Endothelial cell of umbilical vein (primary cell): ENCODE measurements at regions of chr7 and their contacts with region 1.

Region 1: GRCh38 chr7:116354546-116355408 is 144.4 kb downstream of the TES start:
- DNase-seq: peak; percentile 99
- H3K4me3 ChIP-seq: peak overlapping the region in 1 of 3 experiments; percentile 14
- H3K27ac ChIP-seq: peak overlapping the region; percentile 99
- H3K4me1 ChIP-seq: peaks cover 63% of the 10 kb centered on the region
- H3K27me3 ChIP-seq: no peaks in the 10 kb centered on the region
- CTCF ChIP-seq: no peak
- POLR2A ChIP-seq: no peak

Region 2: DNA sequence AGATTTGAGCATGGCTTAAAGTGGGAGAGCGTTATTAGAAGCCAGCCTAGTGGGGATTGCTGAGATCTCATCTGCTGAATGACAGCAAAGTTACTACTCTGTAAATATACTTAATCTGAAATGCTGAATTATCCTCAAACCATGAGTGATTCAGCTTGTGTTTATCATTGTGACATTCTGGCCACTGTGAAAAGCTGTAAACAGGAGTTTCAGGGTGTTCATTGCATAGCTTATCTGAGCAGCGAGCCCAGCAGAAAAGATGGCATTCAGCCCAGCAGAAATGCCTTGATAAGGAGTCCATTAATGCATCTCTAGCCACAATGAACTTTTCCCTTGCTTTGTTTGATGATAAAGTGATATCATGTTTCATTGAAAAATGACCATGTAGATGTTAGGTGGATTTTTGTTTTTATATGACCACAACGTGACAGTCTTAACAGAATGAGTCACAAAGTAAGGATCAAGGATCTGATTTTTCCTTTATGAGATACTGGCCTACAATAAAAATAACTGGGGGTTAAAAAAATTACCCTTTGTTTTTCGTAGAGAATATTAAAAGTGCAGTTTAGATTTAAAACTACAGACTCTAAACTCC is 136.6 kb before region 1 on chr7:
- CTCF ChIA-PET with region 1: no interaction called
- POLR2A ChIA-PET with region 1: no interaction called
- dilution Hi-C with region 1: no loop called
- intact Hi-C with region 1: loop called (anchors 1 kb)
- DNase-seq: peak; percentile 97
- H3K4me3 ChIP-seq: peak overlapping the region in 1 of 3 experiments; percentile 28
- H3K27ac ChIP-seq: peak overlapping the region; percentile 96
- H3K4me1 ChIP-seq: peaks cover 56% of the 10 kb centered on the region
- H3K27me3 ChIP-seq: no peaks in the 10 kb centered on the region
- CTCF ChIP-seq: no peak
- POLR2A ChIP-seq: no peak

Region 3: DNA sequence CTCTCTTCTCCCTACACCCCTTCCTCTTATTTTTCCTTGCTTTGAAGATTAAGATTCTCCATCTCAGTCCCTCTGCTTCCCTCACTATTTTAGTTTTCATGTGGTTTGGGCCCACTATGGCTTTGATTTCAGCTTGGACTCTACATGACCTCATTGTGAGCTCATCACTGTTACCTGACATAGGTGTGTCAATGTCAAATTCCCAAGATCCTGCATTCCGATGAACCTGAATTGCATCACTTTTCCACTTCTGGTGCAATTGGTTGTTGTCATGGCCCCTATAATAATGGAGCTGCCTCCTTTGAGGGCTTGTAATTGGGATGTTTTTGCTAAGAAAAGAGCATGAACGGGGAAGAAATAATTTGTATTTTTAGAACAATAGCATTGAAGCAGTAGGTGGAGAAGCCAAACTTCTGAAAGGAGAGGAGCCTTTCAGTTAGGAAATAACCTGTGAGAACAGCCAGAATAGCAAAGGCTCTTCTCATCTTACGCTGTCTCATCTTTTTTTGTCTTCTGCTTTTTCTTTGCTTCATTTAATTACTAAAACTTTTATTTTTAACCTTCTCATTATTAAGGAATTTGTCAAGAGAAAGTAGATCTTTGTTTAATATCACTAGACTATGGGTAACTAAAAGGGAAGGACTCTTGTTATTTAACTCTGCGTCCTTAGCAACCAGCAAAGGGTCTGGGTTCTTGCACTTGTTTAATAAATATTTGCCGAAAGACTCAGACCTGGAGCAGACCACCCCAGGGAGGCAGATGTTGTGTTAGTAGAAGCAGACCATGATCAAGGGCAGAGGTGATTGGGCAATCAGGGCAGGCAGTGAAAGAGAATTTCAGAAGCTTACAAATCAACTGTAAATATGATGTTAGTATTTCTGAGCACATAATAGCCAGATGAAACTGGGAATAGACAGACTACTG is 49.0 kb before region 1 on chr7:
- CTCF ChIA-PET with region 1: no interaction called
- POLR2A ChIA-PET with region 1: no interaction called
- dilution Hi-C with region 1: no loop called
- intact Hi-C with region 1: no loop called
- DNase-seq: no peak
- H3K4me3 ChIP-seq: no peak overlapping the region
- H3K27ac ChIP-seq: no peak overlapping the region
- H3K4me1 ChIP-seq: peaks cover 21% of the 10 kb centered on the region
- H3K27me3 ChIP-seq: no peaks in the 10 kb centered on the region
- CTCF ChIP-seq: no peak
- POLR2A ChIP-seq: no peak

Region 4: GRCh38 chr7:116316833-116317612 is 37.8 kb before region 1 on chr7:
- CTCF ChIA-PET with region 1: no interaction called
- POLR2A ChIA-PET with region 1: no interaction called
- dilution Hi-C with region 1: no loop called
- intact Hi-C with region 1: loop called (anchors 1 kb)
- DNase-seq: peak; percentile 99
- H3K4me3 ChIP-seq: peak overlapping the region in 2 of 3 experiments; percentile 12 to 57
- H3K27ac ChIP-seq: peak overlapping the region; percentile 97
- H3K4me1 ChIP-seq: peaks cover 63% of the 10 kb centered on the region
- H3K27me3 ChIP-seq: no peaks in the 10 kb centered on the region
- CTCF ChIP-seq: no peak
- POLR2A ChIP-seq: peak; percentile 15

Region 5: GRCh38 chr7:116395125-116395791 is 40.5 kb after region 1 on chr7:
- CTCF ChIA-PET with region 1: interaction called, 6 read pairs
- POLR2A ChIA-PET with region 1: interaction called, 6 read pairs
- dilution Hi-C with region 1: no loop called
- intact Hi-C with region 1: loop called (anchors 1 kb)
- DNase-seq: peak; percentile 88
- H3K4me3 ChIP-seq: no peak overlapping the region
- H3K27ac ChIP-seq: peak overlapping the region; percentile 85
- H3K4me1 ChIP-seq: peaks cover 38% of the 10 kb centered on the region
- H3K27me3 ChIP-seq: no peaks in the 10 kb centered on the region
- CTCF ChIP-seq: no peak
- POLR2A ChIP-seq: no peak

Region 6: DNA sequence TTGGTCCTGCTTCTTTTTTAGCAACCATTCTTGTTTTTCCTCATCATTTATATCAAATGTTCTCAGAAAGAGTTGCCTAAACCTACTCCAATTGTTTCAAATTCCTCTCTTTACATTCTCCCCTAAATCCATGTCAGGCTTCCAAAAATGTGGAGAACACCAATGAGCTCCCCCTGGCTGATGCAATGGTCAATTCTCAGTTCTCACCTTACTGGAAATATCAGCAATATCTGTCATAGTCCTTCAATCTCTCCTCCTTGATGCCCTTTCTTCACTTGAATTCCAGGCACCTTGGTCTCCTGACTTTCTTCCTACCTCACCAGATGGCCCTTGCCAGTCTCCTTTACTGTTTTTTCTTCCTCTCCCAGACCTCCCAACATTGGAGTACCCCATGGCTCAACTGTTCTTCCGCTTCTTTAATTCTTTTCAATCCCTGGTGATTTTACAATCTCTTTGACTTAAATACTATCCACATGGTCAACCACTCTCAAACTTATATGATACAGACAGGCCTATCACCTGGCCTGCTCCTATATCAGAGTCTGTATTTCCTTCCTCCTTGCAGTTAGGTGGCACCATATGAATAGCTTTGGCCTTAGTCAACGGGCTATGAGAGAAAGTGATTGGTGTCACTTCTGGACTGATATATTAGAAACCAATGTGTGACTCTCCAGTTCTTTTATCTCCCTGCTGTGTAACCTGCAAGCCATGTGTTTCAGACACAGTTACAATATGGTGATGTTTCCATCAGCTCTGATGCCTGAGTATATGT is 97.4 kb after region 1 on chr7:
- CTCF ChIA-PET with region 1: no interaction called
- POLR2A ChIA-PET with region 1: no interaction called
- dilution Hi-C with region 1: no loop called
- intact Hi-C with region 1: no loop called
- DNase-seq: no peak
- H3K4me3 ChIP-seq: no peak overlapping the region
- H3K27ac ChIP-seq: no peak overlapping the region
- H3K4me1 ChIP-seq: peaks cover 12% of the 10 kb centered on the region
- H3K27me3 ChIP-seq: no peaks in the 10 kb centered on the region
- CTCF ChIP-seq: no peak
- POLR2A ChIP-seq: no peak

Region 7: GRCh38 chr7:116499168-116500077 is 144.6 kb after region 1 on chr7 and contains the start of gene CAV2:
- CTCF ChIA-PET with region 1: interaction called, 3 read pairs
- POLR2A ChIA-PET with region 1: no interaction called
- dilution Hi-C with region 1: loop called (anchors 25 kb)
- intact Hi-C with region 1: loop called (anchors 1 kb)
- DNase-seq: peak; percentile 63
- H3K4me3 ChIP-seq: peak within 1 kb of the TSS; percentile 59 to 86 (median 82)
- H3K27ac ChIP-seq: peak within 1 kb of the TSS; percentile 83
- H3K4me1 ChIP-seq: peaks cover 31% of the 10 kb centered on the region
- H3K27me3 ChIP-seq: no peaks in the 10 kb centered on the region
- CTCF ChIP-seq: no peak
- POLR2A ChIP-seq: peak; percentile 76
- total RNA-seq, gene CAV2: 146 and 179 TPM in 2 replicates

Region 8: DNA sequence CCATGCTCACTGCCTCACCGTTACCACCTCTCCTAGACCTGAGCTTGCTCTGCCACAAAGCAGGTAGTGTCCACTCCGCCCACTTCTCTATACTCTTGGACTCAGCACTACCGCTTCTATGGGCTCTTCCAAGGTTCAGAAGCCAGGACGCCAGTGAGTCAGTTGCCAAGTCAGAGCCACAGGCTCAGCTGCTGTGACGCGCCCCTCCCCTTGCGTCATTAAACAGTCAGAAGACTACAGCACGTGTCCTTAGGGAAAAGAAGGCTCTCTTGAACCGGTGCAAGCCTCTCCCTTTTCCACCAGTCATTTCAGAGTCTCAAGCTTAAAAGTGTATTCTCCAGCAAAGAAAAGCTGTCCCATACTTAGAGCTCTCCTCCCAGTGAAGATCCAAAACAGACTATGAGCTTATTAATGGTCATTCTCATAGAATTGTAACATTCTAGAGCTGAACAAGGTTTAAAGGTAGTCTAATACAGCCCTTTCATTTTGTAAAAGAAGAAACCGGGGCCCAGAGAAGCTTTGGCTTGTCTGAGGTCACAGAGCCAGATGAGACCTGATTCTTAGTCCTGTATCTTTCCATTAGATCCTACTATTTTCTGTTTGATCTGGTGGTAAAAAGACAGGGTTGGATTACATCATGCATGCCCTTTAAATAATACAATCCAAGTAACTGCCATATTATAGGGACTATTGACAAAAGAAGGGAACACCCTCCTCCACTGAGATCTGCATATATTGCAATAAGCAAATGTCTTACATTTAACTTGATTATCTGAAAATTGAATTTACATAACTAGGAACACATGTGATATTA is 276.4 kb after region 1 on chr7:
- CTCF ChIA-PET with region 1: no interaction called
- POLR2A ChIA-PET with region 1: no interaction called
- dilution Hi-C with region 1: no loop called
- intact Hi-C with region 1: no loop called
- DNase-seq: no peak
- H3K4me3 ChIP-seq: no peak overlapping the region
- H3K27ac ChIP-seq: no peak overlapping the region
- H3K4me1 ChIP-seq: no peaks in the 10 kb centered on the region
- H3K27me3 ChIP-seq: peaks cover 0 to under 1% of the 10 kb centered on the region in 2 experiments
- CTCF ChIP-seq: no peak
- POLR2A ChIP-seq: no peak

Region 9: GRCh38 chr7:116776610-116777289 is 422.0 kb after region 1 on chr7:
- CTCF ChIA-PET with region 1: no interaction called
- POLR2A ChIA-PET with region 1: no interaction called
- dilution Hi-C with region 1: no loop called
- intact Hi-C with region 1: loop called (anchors 1 kb)
- DNase-seq: peak; percentile 78
- H3K4me3 ChIP-seq: no peak overlapping the region
- H3K27ac ChIP-seq: peak overlapping the region; percentile 47
- H3K4me1 ChIP-seq: peaks cover 53% of the 10 kb centered on the region
- H3K27me3 ChIP-seq: no peaks in the 10 kb centered on the region
- CTCF ChIP-seq: no peak
- POLR2A ChIP-seq: no peak